ENCODE measurements at regions of chrX and their contacts with region 1.

Region 1: DNA sequence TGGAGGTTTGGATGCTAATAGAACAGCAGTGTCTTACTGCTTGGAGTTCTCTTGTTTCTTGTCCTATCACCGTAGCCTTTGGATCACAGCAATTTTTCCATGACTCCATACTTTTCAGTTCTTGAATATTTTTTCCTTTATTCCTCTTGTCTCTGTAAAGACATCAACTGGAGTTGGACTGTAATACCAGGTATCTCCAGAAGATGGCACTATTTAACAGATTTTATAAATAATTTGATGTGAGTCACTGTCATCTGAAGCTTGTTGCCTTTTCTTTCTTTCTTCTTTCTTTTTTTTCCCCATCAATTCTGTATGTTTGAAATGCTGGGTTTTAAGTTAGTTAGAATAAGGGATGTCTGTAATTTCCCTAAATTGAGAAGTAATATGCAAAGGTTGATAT is 24.1 kb downstream of the HPRT1 start:
- DNase-seq: no peak
- ATAC-seq: no peak

Region 2: DNA sequence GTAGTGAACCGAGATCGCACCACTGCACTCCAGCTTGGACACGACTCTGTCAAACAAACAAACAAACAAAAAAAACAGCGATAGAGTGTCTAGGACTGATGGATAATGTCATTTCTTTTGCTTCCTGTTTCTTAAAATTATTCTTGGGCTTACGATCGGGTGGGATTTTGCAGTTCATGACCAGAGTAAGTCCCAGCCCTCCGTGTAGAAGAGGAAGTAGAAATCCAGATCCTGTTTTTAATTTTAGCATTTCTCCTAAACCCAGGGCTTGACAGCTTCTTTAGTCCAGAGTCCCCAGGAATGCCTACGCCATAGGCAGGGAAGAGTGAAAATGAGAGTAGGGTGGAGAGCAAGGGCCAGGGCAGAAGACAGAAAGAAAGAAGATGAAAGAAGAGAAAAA is 70.3 kb after region 1 on chrX:
- intact Hi-C with region 1: no loop called
- DNase-seq: no peak
- ATAC-seq: no peak

Region 3: DNA sequence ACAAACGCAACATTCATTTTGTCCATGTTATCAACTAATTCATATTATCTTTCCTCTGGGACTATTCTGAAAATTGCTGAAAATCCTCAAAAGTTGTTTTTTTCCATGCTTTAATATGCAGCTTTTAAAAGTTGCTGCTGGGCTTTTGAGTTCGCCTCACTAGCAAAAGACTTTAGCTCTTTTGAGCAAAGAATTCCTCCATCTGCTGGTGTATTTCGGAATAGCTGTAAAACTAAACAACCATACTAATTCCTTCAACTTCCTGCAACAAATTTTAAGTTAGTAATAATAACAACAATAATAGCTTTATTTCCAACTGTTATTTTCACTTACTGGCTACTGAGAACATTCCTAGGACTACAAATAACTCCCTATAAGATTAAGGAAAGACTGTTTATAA is 298.8 kb after region 1 on chrX:
- intact Hi-C with region 1: loop called (anchors 5 kb)
- DNase-seq: no peak
- ATAC-seq: no peak

Measured in Right ventricle myocardium inferior (tissue), 1 donor.